ENCODE measurements at regions of chr20 and their contacts with region 1.

Region 1: GRCh38 chr20:25407311-25408169 is at the start of gene GINS1:
- DNase-seq: peak; percentile 75 to 94 (median 84)
- H3K4me3 ChIP-seq: peak within 1 kb of the TSS; percentile 54 to 97 (median 76)
- H3K27ac ChIP-seq: peak within 1 kb of the TSS in 39 of 59 donors; percentile 5 to 79 (median 52)
- H3K27me3 ChIP-seq: no peaks in the 10 kb centered on the region
- CTCF ChIP-seq: peak in 39 of 56 donors; percentile 2 to 55 (median 30)
- total RNA-seq, gene GINS1: 1.5 to 7.8 (median 3.0) TPM

Region 2: GRCh38 chr20:24469116-24469893 is 938.2 kb before region 1 on chr20 and contains the start of gene SYNDIG1:
- intact Hi-C with region 1: no loop called
- DNase-seq: peak; percentile 68 to 84 (median 76)
- H3K4me3 ChIP-seq: peak within 1 kb of the TSS; percentile 55 to 92 (median 80)
- H3K27ac ChIP-seq: peak within 1 kb of the TSS; percentile 78 to 98 (median 93)
- H3K27me3 ChIP-seq: peaks cover 0 to 11% (median 0%) of the 10 kb centered on the region in 45 donors
- CTCF ChIP-seq: peak in 8 of 56 donors; percentile 2 to 33 (median 12)
- total RNA-seq, gene SYNDIG1: 26.8 to 67.4 (median 45.8) TPM

Region 3: GRCh38 chr20:25057234-25058050 is 350.1 kb before region 1 on chr20:
- intact Hi-C with region 1: loop called in 1 of 2 experiments (anchors 5 kb)
- DNase-seq: peak in 9 of 10 donors; percentile 60 to 86 (median 75)
- H3K4me3 ChIP-seq: peak overlapping the region; percentile 55 to 95 (median 80)
- H3K27ac ChIP-seq: peak overlapping the region; percentile 78 to 99 (median 94)
- H3K27me3 ChIP-seq: peaks cover 0 to 5% (median 0%) of the 10 kb centered on the region in 45 donors
- CTCF ChIP-seq: peak in 23 of 56 donors; percentile 8 to 42 (median 23)

Region 4: DNA sequence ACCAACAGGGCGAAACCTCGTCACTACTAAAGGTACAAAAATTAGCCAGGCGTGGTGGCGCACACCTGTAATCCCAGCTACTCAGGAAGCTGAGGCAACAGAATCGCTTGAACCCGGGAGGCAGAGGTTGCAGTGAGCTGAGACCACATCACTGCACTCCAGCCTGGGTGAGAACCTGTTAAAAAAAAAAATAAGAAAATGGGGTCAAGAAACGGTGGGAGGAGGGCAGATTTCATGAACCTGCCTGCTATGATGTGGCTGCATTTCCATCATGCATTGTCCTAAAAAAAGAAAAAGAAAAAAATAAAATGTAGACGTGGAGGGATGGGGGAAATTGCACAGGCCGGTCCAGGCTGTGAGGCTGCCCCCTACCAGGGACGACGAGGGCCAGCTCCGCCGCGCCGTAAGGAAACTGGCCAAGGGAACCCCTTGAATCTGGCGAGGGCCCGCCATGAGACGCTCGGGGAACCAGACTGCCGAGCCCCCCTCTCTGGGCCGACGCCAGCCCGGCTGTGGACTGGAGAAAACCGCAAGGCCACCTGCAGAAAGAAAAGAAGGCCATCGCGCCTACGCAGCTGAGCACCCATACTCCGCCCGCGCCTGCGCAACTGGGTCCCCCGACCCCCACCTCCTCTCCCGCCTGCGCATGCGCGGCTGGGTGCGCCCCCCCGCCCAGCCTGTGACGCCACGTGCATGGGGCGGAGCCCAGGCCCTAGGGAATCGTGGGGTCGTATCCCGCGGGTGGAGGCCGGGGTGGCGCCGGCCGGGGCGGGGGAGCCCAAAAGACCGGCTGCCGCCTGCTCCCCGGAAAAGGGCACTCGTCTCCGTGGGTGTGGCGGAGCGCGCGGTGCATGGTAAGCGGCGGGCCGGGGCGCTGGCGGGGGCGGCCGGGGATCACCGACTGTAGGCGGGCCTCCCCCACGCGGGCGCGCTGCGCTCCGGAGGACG is 212.3 kb before region 1 on chr20 and contains the start of gene ENTPD6:
- intact Hi-C with region 1: loop called in 1 of 2 experiments (anchors 5 kb)
- DNase-seq: peak; percentile 84 to 97 (median 90)
- H3K4me3 ChIP-seq: peak within 1 kb of the TSS; percentile 77 to 100 (median 95)
- H3K27ac ChIP-seq: peak within 1 kb of the TSS; percentile 79 to 100 (median 94)
- H3K27me3 ChIP-seq: no peaks in the 10 kb centered on the region
- CTCF ChIP-seq: peak in 51 of 56 donors; percentile 14 to 70 (median 44)
- total RNA-seq, gene ENTPD6: 90.8 to 200 (median 142) TPM

Region 5: DNA sequence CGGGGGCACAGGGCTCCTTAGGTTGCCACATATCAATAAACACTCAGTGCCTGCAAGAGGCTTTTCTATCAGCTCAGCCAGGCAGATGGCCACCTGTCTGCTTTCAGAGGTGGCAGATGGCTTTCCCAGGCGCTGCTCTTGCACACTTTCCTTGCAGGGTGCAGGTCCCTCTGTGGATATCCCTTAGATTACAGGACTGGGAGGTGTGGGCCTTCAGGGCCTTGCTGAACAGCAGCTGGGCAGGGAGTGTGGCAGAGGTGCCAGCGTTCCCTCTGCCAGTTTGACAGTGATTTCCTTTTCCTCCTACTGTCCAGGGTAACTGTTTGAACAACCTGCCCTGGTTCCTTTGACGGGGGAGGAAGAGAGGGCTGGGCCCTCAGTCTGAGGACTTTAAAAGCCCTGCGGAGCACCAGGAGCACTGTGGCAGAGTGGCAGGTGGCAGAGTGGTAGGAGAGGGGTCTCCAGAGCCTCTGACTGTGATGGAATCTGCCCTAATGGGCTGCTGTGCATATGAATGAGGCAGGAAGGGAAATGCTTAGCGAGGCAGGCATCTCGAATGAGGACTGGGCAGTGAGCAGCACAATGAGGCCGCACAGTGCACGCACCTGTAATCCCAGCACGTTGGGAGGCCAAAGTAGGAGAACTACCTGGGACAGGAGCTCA is 51.1 kb before region 1 on chr20:
- intact Hi-C with region 1: no loop called
- DNase-seq: peak in 2 of 10 donors; percentile 38 to 80
- H3K4me3 ChIP-seq: peak overlapping the region in 4 of 59 donors; percentile 7 to 21 (median 12)
- H3K27ac ChIP-seq: peak overlapping the region; percentile 5 to 94 (median 85)
- H3K27me3 ChIP-seq: no peaks in the 10 kb centered on the region
- CTCF ChIP-seq: no peak

Region 6: DNA sequence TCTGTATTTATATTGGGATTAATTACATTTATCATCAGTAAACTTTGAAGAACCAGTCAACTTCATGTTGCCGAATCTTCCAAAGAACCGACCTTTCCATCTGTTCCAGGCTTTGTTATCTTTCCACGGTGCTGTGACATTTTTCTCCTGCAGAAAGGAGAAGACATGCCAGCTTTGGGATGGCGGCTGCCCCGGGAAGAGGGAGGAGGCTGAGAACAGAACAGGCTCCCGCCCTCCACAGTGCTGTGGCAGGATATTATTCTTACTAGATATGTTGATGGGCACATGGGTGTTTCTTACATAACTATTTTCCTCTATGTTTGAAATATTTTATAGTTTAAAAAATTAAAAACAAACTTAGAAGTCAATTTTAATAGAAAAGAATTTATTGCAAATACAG is 44.8 kb after region 1 on chr20:
- intact Hi-C with region 1: no loop called
- DNase-seq: no peak
- H3K4me3 ChIP-seq: no peak overlapping the region
- H3K27ac ChIP-seq: no peak overlapping the region
- H3K27me3 ChIP-seq: no peaks in the 10 kb centered on the region
- CTCF ChIP-seq: no peak

Region 7: DNA sequence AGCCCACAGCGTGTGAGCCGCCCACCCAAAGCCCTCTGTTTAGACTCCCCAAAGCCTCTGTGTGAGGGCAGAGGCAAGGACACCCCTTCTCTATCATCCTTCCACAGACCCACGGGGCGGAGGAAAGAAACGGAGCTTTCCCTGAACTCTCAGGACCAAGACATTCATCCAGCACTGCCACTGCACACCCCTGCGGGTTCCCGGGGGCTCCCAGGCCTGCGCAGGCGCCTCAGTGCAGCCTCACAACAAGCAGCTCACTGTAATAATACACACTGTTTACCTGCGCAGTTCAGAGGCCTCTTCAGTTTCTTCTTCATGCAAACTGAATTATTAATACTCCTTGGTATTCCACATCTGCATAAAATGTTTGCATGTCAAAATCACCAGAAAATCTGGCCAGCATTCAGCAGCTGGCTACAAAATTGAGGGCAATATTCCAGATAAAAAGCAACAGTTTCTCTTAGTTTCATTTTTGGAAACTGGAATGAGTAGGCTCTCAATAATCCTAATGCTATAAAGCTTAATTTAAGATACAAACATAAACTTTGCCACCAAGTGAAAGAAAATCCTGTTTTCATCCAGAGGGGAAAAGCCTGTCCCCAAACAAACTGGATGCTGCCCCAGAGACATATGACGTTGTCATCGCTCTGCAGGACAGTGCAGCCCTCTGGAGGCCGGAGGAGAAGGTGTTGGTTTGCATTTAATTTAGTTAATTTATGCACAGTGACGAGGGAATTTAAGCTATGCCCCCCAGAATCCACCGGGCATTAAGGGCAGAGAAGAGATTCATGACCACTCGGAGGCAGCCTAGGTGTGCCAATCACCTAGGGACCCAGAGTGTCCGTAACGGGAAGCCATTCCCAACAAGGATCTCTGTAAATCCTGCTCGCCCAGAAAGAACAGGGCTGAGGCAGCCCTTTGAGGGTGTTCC is 132.5 kb after region 1 on chr20:
- intact Hi-C with region 1: loop called in 1 of 2 experiments (anchors 5 kb)
- DNase-seq: peak in 8 of 10 donors; percentile 39 to 71 (median 60)
- H3K4me3 ChIP-seq: peak overlapping the region; percentile 31 to 69 (median 54)
- H3K27ac ChIP-seq: peak overlapping the region in 52 of 59 donors; percentile 1 to 86 (median 64)
- H3K27me3 ChIP-seq: no peaks in the 10 kb centered on the region
- CTCF ChIP-seq: peak; percentile 36 to 77 (median 60)

Region 8: DNA sequence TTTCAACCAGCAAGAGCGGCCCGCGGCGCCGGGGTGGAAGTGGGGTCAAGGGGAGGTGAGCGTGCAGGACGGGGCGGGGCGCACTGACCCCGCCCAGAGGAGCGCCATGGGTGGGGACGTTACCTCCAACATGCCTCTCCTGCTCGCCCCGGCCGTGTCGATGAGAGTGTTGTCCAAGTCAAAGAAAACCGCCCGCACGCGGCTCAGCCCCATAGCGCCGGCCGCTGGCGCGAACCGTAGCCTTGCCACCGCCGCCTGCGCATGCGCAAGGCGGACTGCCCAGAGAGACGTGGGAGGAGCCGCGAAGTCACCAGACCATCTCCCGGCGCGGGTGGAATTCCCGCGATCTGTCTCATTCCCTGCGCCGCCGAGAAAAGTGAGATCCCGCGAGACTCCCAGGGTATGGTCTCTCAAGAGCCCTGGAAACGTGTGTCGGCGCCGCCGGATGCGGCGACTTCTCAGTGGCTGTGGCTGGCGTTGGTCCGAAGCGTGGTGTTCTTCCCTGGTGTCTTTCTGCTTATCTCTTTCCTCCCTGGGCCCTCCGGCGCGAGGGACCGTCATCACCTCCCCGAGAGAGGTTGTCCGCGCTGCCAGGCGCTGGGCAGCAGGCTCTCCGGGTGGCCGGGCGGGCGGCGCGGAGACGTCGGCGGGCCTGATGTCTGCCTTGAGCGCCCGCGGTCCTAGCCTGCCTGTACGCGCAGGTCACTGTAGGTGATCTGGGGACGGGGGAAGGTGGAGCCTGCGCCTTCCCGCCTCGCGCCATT is 216.4 kb after region 1 on chr20 and contains the start of gene NANP:
- intact Hi-C with region 1: loop called (anchors 10 kb)
- DNase-seq: peak; percentile 84 to 97 (median 92)
- H3K4me3 ChIP-seq: peak within 1 kb of the TSS; percentile 65 to 99 (median 92)
- H3K27ac ChIP-seq: peak within 1 kb of the TSS; percentile 13 to 95 (median 85)
- H3K27me3 ChIP-seq: no peaks in the 10 kb centered on the region
- CTCF ChIP-seq: peak in 45 of 56 donors; percentile 8 to 63 (median 35)
- total RNA-seq, gene NANP: 1.2 to 4.5 (median 2.9) TPM

Region 9: DNA sequence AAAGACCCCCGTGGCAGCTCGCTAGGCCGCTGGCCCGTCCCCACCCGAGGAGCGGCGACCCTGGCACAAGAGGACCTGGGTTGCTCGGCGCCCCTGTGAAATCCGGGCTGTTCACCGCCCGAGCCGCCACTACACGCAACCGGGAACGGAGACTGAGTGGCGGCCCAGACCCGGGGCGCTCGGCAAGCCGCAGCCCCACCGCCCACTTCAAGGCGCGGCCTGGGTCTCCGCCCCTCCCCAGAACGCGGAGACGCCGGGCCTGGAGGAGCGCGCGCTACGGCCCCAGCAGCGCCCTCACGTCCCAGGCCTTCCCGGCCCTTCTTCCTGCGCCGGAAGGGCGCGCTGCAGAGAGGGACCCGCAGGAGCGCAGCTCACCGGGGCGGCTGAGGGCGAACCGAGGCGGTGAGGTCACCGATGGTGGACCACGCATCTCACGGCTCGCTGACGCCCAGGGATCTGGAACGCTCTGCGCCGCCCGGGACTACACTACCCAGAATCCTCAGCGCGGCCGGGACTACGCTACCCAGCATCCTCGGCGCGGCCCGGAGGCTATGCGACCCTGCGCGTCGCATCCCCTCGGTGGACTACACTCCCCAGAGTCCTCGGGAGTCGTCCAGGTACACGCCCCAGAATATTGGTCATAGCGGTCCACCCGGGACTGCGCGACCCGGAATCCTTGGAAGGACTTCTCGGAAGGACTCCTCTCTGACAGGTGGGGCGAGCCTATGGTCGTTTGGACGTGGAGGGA is 289.0 kb after region 1 on chr20 and contains the start of gene ZNF337:
- intact Hi-C with region 1: loop called in 1 of 2 experiments (anchors 5 kb)
- DNase-seq: peak; percentile 90 to 98 (median 94)
- H3K4me3 ChIP-seq: peak within 1 kb of the TSS; percentile 70 to 98 (median 89)
- H3K27ac ChIP-seq: peak within 1 kb of the TSS; percentile 10 to 99 (median 92)
- H3K27me3 ChIP-seq: no peaks in the 10 kb centered on the region
- CTCF ChIP-seq: peak in 42 of 56 donors; percentile 6 to 62 (median 39)
- total RNA-seq, gene ZNF337: 18.1 to 47.1 (median 27.5) TPM